Dorsolateral prefrontal cortex (tissue), 120 donors: ENCODE measurements at regions of chr13 and their contacts with region 1.

Region 1: DNA sequence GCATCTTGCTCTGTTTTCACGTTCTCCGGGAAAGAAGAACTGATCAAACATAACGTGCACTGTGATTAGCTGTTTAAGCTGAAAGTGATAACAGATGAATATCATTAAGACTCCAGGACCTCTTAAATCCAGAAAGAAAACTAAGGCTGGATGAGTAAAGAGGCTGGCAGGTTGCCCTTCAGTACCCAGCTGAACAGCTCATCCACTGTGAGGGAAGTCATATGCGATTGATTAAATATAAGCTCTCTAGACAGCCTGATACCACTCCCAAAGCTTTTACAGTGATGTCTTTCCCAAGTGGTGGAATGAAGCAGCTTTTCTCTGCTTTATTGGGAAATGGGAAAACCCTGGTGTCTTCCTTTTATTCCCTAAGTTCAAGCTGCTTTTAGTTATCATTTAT is 116.9 kb downstream of the EFNB2 start:
- DNase-seq: no peak
- H3K4me3 ChIP-seq: peak overlapping the region in 20 of 59 donors; percentile 5 to 38 (median 20)
- H3K27ac ChIP-seq: no peak overlapping the region
- H3K27me3 ChIP-seq: no peaks in the 10 kb centered on the region
- CTCF ChIP-seq: no peak

Region 2: GRCh38 chr13:106367361-106367971 is 51.1 kb before region 1 on chr13:
- intact Hi-C with region 1: loop called in 1 of 2 experiments (anchors 10 kb)
- DNase-seq: no peak
- H3K4me3 ChIP-seq: no peak overlapping the region
- H3K27ac ChIP-seq: peak overlapping the region in 16 of 59 donors; percentile 1 to 61 (median 18)
- H3K27me3 ChIP-seq: no peaks in the 10 kb centered on the region
- CTCF ChIP-seq: no peak

Region 3: DNA sequence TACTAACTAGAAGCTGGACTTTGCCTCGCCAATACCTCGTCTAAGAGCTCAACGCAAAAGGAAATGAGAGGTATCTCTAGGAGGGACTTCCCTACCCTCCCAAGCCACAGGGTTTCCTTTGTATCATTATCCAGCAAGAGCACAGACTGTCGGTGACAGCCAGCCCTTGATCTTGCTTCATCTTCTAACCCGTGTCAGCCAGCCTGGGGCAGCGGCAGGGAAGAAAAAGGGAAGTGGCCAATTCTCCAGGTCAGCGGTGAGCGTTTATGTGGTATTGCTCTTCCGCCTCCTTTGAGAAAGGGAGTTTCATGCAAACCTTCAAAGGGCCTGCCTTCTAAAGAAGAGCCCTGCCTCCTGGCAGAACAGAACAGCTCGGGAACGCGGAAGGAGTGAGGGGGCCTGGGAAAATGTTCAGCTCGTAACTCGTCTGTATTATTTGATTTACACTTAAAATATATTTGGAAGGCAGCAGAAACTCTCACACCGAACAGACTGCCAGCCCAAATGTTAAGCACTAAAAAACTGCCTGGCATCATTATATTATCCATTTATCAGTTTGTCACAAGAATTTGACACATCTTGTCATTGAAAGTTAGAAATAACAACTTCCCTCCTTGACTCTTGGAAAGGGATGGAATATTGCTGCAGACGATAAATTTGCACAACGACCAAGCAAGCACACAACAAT is 75.1 kb after region 1 on chr13:
- intact Hi-C with region 1: loop called in 1 of 2 experiments (anchors 5 kb)
- DNase-seq: peak in 1 of 10 donors; percentile 26
- H3K4me3 ChIP-seq: peak overlapping the region in 28 of 59 donors; percentile 0 to 48 (median 17)
- H3K27ac ChIP-seq: peak overlapping the region in 58 of 59 donors; percentile 75 to 99 (median 97)
- H3K27me3 ChIP-seq: no peaks in the 10 kb centered on the region
- CTCF ChIP-seq: no peak

Region 4: GRCh38 chr13:106507560-106508274 is 89.2 kb after region 1 on chr13:
- intact Hi-C with region 1: no loop called
- DNase-seq: peak in 1 of 10 donors; percentile 50
- H3K4me3 ChIP-seq: peak overlapping the region in 57 of 59 donors; percentile 1 to 64 (median 36)
- H3K27ac ChIP-seq: peak overlapping the region; percentile 28 to 96 (median 89)
- H3K27me3 ChIP-seq: no peaks in the 10 kb centered on the region
- CTCF ChIP-seq: peak in 4 of 56 donors; percentile 7 to 27 (median 19)